Right lobe of liver (tissue), 6 donors: ENCODE measurements at regions of chr5 and their contacts with region 1.

Region 1: GRCh38 chr5:179763215-179763945 is 30.4 kb upstream of the LTC4S start:
- DNase-seq: peak in 2 of 3 donors; percentile 43 to 64
- ATAC-seq: peak; percentile 75 to 86 (median 80)
- H3K4me3 ChIP-seq: no peak overlapping the region
- H3K27ac ChIP-seq: no peak overlapping the region
- H3K4me1 ChIP-seq: peaks cover 0 to 60% (median 28%) of the 10 kb centered on the region in 4 donors
- H3K27me3 ChIP-seq: no peaks in the 10 kb centered on the region
- CTCF ChIP-seq: peak; percentile 84 to 96 (median 92)
- POLR2A ChIP-seq: no peak

Region 2: GRCh38 chr5:179422213-179422855 is 341.0 kb before region 1 on chr5:
- intact Hi-C with region 1: no loop called
- DNase-seq: no peak
- ATAC-seq: no peak
- H3K4me3 ChIP-seq: no peak overlapping the region
- H3K27ac ChIP-seq: no peak overlapping the region
- H3K4me1 ChIP-seq: no peaks in the 10 kb centered on the region
- H3K27me3 ChIP-seq: no peaks in the 10 kb centered on the region
- CTCF ChIP-seq: no peak
- POLR2A ChIP-seq: no peak

Region 3: DNA sequence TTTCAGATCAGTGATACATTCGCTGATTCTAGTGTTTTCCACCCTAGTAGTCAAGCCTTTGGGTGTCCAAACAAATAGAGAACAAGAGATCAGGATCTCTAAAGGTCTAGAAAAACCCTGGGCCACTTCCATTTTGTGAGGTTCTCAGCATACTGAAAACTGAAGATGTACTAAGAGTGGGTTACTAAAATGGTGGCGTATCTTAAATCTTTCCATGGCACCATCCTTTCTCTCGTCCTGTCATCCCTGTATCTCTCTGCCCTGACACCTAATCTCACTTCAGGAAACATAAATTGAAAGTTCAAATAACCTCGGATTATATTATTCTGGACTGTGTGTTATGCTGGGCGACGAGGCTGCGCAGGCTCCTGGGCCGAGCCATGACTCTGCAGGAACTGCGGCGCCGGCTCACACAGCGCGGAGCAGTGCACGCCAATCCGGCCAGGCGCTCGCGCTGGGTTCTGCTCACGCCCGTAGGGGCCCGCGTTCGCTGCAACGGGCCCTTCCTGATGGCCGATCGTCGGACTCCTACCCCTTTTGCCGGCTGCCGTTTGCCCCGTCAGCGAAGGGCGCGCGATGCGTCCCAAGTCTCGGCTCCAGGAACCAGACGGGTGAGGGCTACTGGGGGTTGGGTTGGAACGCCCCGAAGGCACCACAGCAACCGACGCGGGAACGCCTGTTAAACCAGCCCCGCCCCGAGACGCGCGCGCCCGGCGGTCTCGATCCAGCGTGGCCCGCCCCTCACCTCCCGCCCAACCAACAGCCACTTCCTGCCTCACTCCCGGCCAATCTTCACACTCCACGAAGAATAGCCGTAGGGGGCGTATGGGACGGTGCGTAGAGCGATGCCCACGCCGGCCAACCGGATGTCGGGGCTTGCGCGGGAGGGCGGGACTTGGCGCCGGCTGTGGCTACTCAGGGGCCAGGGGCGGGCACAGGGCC is 65.1 kb before region 1 on chr5:
- intact Hi-C with region 1: no loop called
- DNase-seq: peak; percentile 99 to 100 (median 99)
- ATAC-seq: peak; percentile 89 to 95 (median 93)
- H3K4me3 ChIP-seq: peak overlapping the region; percentile 86 to 99 (median 92)
- H3K27ac ChIP-seq: peak overlapping the region; percentile 92 to 99 (median 93)
- H3K4me1 ChIP-seq: peaks cover 0 to 32% (median 0%) of the 10 kb centered on the region in 4 donors
- H3K27me3 ChIP-seq: no peaks in the 10 kb centered on the region
- CTCF ChIP-seq: peak in 3 of 4 donors; percentile 2 to 29 (median 29)
- POLR2A ChIP-seq: peak; percentile 83

Region 4: GRCh38 chr5:179795863-179796833 is 32.8 kb after region 1 on chr5:
- intact Hi-C with region 1: loop called (anchors 5 kb)
- DNase-seq: peak; percentile 88 to 90 (median 89)
- ATAC-seq: peak; percentile 76 to 87 (median 83)
- H3K4me3 ChIP-seq: peak overlapping the region; percentile 48 to 62 (median 56)
- H3K27ac ChIP-seq: peak overlapping the region; percentile 43 to 75 (median 67)
- H3K4me1 ChIP-seq: peaks cover 0 to 18% (median 8%) of the 10 kb centered on the region in 4 donors
- H3K27me3 ChIP-seq: no peaks in the 10 kb centered on the region
- CTCF ChIP-seq: peak; percentile 85 to 97 (median 90)
- POLR2A ChIP-seq: peak; percentile 65